PC-3 (cell line): ENCODE measurements at regions of chr1 and their contacts with region 1.

Region 1: GRCh38 chr1:143735764-143736461 is 235.9 kb downstream of the FAM72C start:
- DNase-seq: no peak
- ATAC-seq: no peak
- H3K4me3 ChIP-seq: no peak overlapping the region
- H3K27ac ChIP-seq: no peak overlapping the region
- H3K4me1 ChIP-seq: no peaks in the 10 kb centered on the region
- H3K27me3 ChIP-seq: 0 out of 2 replicates have a peak, but pooled peaks cover 15% of the 10 kb centered on the region
- CTCF ChIP-seq: no peak

Region 2: DNA sequence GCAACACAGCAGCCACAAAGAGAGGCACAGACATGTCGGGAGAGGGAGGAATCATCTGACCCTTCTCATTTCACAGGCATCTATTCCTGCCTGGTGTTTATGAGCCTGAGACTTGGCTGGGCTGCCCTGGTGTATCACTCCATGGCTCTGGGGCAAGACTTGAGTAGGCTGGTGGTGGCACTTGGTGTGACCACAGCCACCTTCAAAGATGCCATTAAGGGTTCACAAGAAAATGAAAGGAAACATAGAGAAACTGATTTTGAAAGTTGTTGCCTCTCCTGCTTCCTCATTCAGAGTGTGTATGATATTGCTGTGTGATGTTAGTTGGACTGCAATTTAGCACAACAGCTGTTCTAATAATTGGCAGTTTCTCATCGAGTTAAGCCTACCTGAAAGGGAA is 62.9 kb before region 1 on chr1:
- CTCF ChIA-PET with region 1: no interaction called
- POLR2A ChIA-PET with region 1: no interaction called
- intact Hi-C with region 1: no loop called
- DNase-seq: no peak
- ATAC-seq: no peak
- H3K4me3 ChIP-seq: no peak overlapping the region
- H3K27ac ChIP-seq: no peak overlapping the region
- H3K4me1 ChIP-seq: no peaks in the 10 kb centered on the region
- H3K27me3 ChIP-seq: peaks cover 40% of the 10 kb centered on the region
- CTCF ChIP-seq: no peak

Region 3: DNA sequence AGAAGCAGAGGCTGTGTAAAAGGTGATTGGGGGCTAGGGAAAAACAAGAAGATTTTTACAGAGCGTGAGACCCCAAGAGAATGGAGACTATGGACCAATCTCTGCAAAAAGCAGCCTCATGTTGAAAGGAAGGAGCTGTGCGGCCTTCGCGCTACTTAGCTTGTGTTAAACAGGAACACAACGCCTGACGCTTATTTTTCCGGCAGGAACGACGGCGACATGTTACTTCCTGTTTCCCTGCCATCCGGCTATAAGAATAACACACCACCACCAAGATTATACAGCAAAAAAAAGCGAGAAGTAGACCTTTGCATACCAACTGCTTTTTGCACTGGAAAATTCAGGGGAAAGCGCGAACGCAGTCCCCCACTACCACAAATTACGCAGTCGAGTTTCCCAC is 36.8 kb before region 1 on chr1:
- CTCF ChIA-PET with region 1: interaction called, 12 read pairs
- POLR2A ChIA-PET with region 1: no interaction called
- intact Hi-C with region 1: no loop called
- DNase-seq: no peak
- ATAC-seq: no peak
- H3K4me3 ChIP-seq: no peak overlapping the region
- H3K27ac ChIP-seq: no peak overlapping the region
- H3K4me1 ChIP-seq: no peaks in the 10 kb centered on the region
- H3K27me3 ChIP-seq: no peaks in the 10 kb centered on the region
- CTCF ChIP-seq: no peak